CD8-positive, alpha-beta T cell (primary cell): ENCODE measurements at regions of chr9 and their contacts with region 1.

Region 1: DNA sequence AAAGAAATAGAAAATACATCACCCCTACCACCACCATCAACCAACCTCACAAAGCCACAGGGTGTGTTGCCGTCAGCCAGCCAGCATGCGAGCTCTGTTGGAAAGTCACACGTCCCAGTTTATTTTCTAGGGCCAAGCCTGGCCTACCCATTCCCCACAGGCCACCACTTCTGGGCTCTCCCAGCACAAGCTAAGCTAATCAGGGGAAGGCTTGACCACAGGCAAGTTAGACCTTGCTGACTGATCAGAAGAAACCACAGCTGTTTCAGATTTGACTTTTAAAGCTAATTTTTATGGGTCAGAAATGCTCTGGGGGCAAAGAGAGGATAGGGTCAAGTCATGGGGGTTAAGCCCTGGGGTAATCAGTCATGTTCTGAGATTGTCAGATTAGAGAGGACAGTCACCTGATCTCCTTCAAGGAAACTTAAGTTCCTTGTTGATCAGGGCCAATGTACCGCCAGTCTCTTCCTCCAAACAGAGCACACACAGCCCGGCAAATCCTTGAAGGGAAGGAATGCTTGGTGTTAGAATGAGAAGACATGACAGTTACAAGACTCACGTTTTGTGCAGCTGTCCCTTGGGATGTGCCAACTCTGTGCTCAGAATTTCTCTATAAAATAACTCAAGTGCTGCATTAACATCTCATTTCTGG is 7.6 kb downstream of the SHB start:
- DNase-seq: no peak
- ATAC-seq: no peak
- H3K4me3 ChIP-seq: no peak overlapping the region
- H3K4me3 Mint-ChIP-seq: no peak overlapping the region
- H3K27ac ChIP-seq: no peak overlapping the region
- H3K27ac Mint-ChIP-seq: no peak overlapping the region
- H3K4me1 ChIP-seq: no peaks in the 10 kb centered on the region
- H3K4me1 Mint-ChIP-seq: no peaks in the 10 kb centered on the region
- H3K27me3 ChIP-seq: no peaks in the 10 kb centered on the region
- H3K27me3 Mint-ChIP-seq: no peaks in the 10 kb centered on the region
- CTCF ChIP-seq: no peak

Region 2: GRCh38 chr9:37994639-37995347 is 66.7 kb before region 1 on chr9:
- CTCF ChIA-PET with region 1: no interaction called
- POLR2A ChIA-PET with region 1: no interaction called
- intact Hi-C with region 1: loop called in 1 of 2 experiments (anchors 10 kb)
- DNase-seq: peak in 2 of 9 experiments; percentile 29 to 49
- ATAC-seq: no peak
- H3K4me3 ChIP-seq: no peak overlapping the region
- H3K4me3 Mint-ChIP-seq: no peak overlapping the region
- H3K27ac ChIP-seq: no peak overlapping the region
- H3K27ac Mint-ChIP-seq: no peak overlapping the region
- H3K4me1 ChIP-seq: no peaks in the 10 kb centered on the region
- H3K4me1 Mint-ChIP-seq: peaks cover 8% of the 10 kb centered on the region
- H3K27me3 ChIP-seq: no peaks in the 10 kb centered on the region
- H3K27me3 Mint-ChIP-seq: peaks cover 2% of the 10 kb centered on the region
- CTCF ChIP-seq: no peak